Activated CD4-positive, alpha-beta T cell treated with anti-CD3 and anti-CD28 coated beads, Interleukin-2, amount 10 ng/mL, durations not matched to agents 7 days and 5 days (primary cell): ENCODE measurements at regions of chr13 and their contacts with region 1.

Region 1: DNA sequence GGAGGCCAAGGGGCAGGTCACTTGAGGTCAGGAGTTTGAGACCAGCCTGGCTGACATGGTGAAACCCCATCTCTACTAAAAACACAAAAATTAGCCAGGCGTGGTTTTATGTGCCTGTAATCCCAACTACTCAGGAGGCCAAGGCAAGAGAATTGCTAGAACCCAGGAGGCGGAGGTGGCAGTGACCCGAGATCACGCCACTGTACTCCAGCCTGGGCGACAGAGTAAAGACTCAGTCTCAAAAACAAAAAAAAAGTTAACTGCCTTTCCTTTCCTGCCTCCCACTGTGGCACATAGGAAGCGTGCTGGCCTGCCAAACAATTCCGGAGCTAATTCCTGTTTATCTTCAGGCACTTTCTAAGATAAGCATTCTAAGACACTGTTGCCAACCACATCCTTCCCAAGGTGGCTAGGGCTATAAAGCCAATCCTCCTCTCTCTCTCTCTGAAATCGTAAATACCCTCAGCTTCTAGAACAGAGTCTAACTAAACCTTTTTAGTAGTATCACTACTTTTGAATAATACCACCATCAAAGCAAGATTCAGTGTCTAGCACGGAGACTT is 21.6 kb downstream of the SLC25A30 start:
- DNase-seq: peak; percentile 26
- H3K4me3 Mint-ChIP-seq: no peak overlapping the region
- H3K27ac Mint-ChIP-seq: peak overlapping the region; percentile 89
- H3K4me1 Mint-ChIP-seq: peaks cover 61% of the 10 kb centered on the region
- H3K27me3 Mint-ChIP-seq: no peaks in the 10 kb centered on the region

Region 2: DNA sequence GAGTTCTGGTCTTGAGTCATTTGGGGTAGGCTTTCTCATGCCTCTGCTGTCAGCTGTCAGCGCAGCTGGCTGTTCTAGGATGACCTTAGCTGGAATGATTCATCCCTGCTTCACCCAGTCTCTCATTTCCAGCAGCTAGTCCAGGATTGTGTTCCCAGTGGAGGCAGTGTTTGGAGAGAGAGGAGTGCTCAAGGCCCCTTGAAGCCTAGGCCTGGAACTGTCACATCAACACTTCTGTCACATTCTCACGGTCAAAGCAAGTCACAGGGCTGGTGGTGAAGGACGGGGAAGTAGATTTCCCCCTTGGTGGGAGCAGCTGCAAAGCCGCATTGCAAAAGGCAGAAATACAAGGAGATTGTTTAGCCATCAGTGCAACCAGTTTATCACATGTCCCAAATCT is 70.8 kb before region 1 on chr13:
- CTCF ChIA-PET with region 1: no interaction called
- POLR2A ChIA-PET with region 1: interaction called, 13 read pairs
- DNase-seq: no peak
- H3K4me3 Mint-ChIP-seq: no peak overlapping the region
- H3K27ac Mint-ChIP-seq: no peak overlapping the region
- H3K4me1 Mint-ChIP-seq: peaks cover 32% of the 10 kb centered on the region
- H3K27me3 Mint-ChIP-seq: no peaks in the 10 kb centered on the region

Region 3: DNA sequence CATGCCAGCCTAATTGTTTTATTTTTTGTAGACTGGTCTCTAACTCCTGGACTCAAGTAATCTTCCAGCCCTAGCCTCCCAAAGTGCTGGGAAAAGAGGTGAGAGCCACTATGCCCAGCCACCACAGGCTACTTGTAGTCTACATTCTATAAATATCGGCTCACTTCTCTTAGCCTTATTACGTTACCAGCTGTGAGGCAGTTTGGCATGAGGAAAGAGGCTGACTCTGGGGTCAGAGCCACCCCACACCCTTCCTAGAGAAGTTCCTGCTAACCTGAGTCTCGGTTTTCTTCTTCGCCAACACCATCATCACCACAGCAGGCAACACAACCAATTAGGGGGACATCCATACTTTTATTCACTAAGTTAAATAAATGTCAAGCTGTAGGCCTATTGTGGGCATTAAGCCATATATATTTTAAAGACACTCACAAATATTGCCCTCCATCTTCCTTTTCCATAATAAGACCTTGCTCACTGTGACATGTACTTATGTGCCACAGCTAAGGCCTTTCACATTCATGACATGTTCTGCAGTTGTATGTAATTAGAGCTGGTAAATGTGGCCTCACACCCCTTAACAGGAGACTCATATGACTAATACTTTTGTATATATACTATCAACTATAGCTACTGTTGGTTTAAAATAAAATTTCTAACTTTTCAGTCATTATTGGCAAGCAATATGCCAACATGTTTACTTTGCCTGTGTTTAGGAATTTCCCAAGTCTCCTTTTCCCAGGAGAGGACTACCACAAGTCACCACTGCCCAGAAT is 15.8 kb after region 1 on chr13:
- CTCF ChIA-PET with region 1: interaction called, 13 read pairs
- POLR2A ChIA-PET with region 1: no interaction called
- DNase-seq: no peak
- H3K4me3 Mint-ChIP-seq: no peak overlapping the region
- H3K27ac Mint-ChIP-seq: no peak overlapping the region
- H3K4me1 Mint-ChIP-seq: peaks cover 27% of the 10 kb centered on the region
- H3K27me3 Mint-ChIP-seq: no peaks in the 10 kb centered on the region